Transverse colon (tissue), 4 donors: ENCODE measurements at regions of chr1 and their contacts with region 1.

Region 1: DNA sequence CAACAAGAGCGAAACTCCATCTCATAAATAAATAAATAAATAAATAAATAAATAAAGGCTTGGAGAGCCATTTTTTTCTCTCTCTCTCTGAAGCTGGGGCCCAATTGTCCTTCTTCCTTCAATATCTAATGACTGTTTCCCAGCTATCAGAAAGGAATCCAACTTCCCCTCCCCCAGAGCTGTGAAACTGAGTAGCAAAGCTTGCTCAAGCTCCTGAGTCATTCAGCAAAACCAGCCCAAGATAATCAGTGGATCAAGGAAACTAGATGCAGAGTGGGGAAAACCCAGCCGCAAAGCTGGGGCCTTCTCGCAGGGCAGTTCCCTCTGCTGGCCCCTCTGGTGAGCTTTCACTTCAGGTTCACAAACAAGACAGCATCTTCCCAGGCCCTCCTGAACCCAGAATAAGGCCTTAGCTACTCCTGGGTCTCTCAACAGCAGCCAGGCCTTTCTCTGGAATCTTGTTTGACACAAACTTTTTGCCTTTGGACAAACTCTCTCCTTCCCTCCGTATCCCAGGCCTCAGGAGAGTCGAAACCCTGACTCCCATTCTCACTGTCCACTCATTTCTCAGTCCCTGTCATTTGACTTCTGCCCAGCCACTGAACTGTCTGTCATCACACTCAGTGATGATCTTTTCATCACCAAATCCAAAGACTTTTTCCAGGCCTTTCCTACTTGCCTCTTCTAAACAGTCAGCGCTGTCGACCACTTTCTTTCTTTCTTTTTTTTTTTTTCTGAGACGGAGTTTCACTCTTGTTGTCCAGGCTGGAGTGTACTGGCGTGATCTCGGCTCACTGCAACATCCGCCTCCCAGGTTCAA is 18.0 kb upstream of the PTP4A2 start:
- DNase-seq: peak; percentile 86
- H3K4me3 ChIP-seq: no peak overlapping the region
- H3K27ac ChIP-seq: peak overlapping the region; percentile 72 to 90 (median 86)
- H3K4me1 ChIP-seq: peaks cover 24 to 55% (median 26%) of the 10 kb centered on the region in 4 donors
- H3K27me3 ChIP-seq: no peaks in the 10 kb centered on the region
- CTCF ChIP-seq: peak in 4 of 5 experiments; percentile 9 to 45 (median 32)
- EP300 ChIP-seq: no peak
- POLR2A ChIP-seq: no peak

Region 2: DNA sequence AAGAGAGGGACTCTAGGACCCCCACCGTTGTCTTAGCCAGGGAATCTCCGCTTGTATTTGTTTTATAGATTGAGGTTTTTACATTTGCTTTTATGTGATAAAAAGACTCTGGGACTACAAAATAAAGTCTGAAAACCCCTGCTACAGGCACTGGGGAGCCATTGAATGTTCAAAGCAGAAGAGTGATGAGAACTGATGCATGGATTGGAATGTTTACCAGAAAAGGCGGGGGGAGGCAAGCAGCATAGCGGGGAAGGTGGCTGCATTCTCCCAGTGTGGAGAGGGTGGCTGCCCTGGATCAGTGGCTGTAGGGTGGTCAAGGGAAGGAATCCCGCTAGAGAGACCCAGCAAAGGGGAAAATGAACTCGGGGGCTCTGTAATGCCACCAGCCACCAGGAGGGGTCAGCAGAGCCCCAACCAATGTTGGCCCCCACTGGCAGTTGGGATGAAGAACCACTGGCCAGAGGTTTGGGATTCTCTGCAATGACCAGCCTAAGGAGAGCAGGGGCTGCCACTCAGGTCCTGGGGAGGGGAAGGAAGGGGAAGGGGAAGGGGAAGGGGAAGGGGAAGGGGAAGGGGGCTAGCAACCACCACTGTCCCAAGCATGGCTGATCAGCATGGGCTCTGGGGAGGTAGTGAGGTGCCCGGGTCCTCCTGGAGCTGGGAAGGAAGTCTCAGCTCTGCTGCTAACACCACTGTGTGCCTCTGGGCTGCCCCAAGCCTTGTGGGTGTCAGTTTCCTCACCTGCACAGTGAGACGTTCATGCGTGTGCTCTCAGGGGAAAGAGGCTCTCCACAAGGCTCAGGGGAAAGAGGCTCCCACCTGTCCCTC is 292.3 kb before region 1 on chr1:
- in situ Hi-C with region 1: loop called in 2 of 4 experiments (anchors 25 kb)
- intact Hi-C with region 1: no loop called
- DNase-seq: peak; percentile 71
- H3K4me3 ChIP-seq: no peak overlapping the region
- H3K27ac ChIP-seq: no peak overlapping the region
- H3K4me1 ChIP-seq: peaks cover 0 to 24% (median 18%) of the 10 kb centered on the region in 4 donors
- H3K27me3 ChIP-seq: no peaks in the 10 kb centered on the region
- CTCF ChIP-seq: peak; percentile 91 to 97 (median 95)
- EP300 ChIP-seq: no peak
- POLR2A ChIP-seq: no peak

Region 3: GRCh38 chr1:31815752-31816500 is 140.2 kb before region 1 on chr1 and contains the start of gene SPOCD1:
- in situ Hi-C with region 1: loop called in 2 of 4 experiments (anchors 10 kb)
- intact Hi-C with region 1: loop called (anchors 5 kb)
- DNase-seq: peak; percentile 91
- H3K4me3 ChIP-seq: no peak within 1 kb of the TSS
- H3K27ac ChIP-seq: no peak within 1 kb of the TSS
- H3K4me1 ChIP-seq: peaks cover 0 to 4% (median 2%) of the 10 kb centered on the region in 4 donors
- H3K27me3 ChIP-seq: no peaks in the 10 kb centered on the region
- CTCF ChIP-seq: peak; percentile 61 to 93 (median 86)
- EP300 ChIP-seq: no peak
- POLR2A ChIP-seq: no peak
- total RNA-seq, gene SPOCD1: 0.48 to 0.80 TPM in 2 of 4 donors, not detected in the others

Region 4: DNA sequence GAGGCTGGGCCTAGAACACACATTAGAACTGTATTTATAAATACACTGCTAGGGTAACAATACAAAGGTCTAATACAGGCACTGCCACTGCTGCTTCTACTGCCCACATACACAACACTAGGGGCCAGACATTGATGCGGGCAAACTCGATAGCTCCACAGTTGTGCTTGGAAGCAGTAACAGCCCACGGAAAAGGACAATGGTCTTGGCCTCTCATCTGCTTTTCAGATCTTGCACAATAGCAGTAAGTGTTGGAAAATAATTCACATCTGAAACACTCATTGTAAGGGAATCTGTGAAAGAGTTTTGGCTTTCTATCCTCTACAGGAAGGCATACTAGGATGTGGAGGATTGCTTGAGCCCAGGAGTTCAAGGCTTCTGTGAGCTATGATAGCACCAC is 133.4 kb before region 1 on chr1:
- in situ Hi-C with region 1: loop called in 2 of 4 experiments (anchors 10 kb)
- intact Hi-C with region 1: loop called (anchors 5 kb)
- DNase-seq: no peak
- H3K4me3 ChIP-seq: no peak overlapping the region
- H3K27ac ChIP-seq: no peak overlapping the region
- H3K4me1 ChIP-seq: no peaks in the 10 kb centered on the region
- H3K27me3 ChIP-seq: no peaks in the 10 kb centered on the region
- CTCF ChIP-seq: no peak
- EP300 ChIP-seq: no peak
- POLR2A ChIP-seq: no peak

Region 5: DNA sequence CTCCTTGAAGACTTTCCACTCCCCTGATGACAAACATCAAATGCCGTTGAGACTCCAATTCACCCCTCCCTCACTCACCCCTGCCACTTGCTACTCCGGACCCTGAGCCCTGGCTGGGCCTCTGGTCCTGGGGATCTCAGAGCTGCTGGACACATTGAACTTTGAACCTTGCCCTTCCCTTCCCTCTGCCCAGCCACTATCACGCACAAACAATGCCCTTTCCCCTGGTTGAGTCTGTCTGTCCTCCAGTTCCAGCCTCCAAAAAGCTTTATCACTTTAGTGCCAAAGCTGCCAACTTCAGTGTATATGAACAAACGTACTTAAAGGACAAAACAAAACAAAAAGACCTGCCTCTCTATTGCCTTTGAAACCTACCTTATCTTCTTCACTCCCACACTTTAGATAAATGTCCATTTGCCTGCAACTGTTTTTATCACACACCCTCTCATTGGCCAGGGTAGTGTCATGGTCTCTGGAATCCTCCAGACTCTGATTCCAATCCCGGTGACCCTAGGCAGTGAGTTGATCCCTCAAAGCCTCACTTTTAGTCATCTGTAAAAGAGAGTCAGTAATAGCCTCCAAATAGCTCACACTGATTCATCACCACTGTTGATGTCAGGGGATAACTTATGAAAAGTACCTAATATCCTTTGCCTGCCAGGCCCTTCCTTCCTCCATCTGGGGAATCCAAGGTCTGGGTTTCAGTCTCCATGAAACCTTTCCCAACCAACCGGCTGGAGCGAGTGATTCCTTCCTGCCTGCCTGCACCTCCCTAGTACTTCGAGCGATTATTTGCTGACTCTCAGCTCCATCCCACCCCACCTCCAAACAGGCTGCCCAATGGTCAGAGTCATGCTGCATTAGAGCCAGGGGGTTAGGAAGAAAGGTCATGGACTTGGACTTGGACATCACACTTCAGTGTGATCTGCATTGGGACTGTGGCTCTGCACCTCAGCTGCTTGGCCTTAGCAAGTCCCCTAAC is 124.4 kb before region 1 on chr1:
- in situ Hi-C with region 1: loop called in 2 of 4 experiments (anchors 10 kb)
- intact Hi-C with region 1: no loop called
- DNase-seq: no peak
- H3K4me3 ChIP-seq: no peak overlapping the region
- H3K27ac ChIP-seq: no peak overlapping the region
- H3K4me1 ChIP-seq: peaks cover 0 to 7% (median under 1%) of the 10 kb centered on the region in 4 donors
- H3K27me3 ChIP-seq: peaks cover 2% of the 10 kb centered on the region
- CTCF ChIP-seq: no peak
- EP300 ChIP-seq: no peak
- POLR2A ChIP-seq: no peak